Activated CD4-positive, alpha-beta T cell treated with anti-CD3 and anti-CD28 coated beads, Interleukin-2, amount 10 ng/mL, durations not matched to agents 24 days and 14 days (primary cell): ENCODE measurements at regions of chr3 and their contacts with region 1.

Region 1: DNA sequence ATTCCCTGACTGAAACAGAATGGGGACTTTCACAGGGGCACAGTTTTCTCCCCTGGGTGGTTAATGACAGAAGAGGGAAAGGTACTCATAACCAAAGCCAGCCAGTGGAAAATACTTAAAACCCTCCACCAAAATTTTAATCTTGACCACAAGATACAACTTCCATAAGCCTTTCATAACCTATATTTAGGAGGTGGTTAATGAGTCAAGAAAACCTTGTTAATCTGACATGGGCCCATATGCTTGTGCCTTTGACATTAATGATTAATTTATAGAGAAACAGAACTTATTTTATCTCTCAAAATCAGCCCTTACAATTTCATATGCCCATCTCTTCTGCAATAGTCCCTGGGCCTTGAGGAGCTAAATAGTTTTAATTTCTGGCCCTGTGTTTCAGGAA is 31.2 kb downstream of the IQCF6 start:
- DNase-seq: no peak
- H3K4me3 Mint-ChIP-seq: no peak overlapping the region
- H3K27ac Mint-ChIP-seq: no peak overlapping the region
- H3K4me1 Mint-ChIP-seq: peaks cover 16% of the 10 kb centered on the region
- H3K27me3 Mint-ChIP-seq: no peaks in the 10 kb centered on the region

Region 2: DNA sequence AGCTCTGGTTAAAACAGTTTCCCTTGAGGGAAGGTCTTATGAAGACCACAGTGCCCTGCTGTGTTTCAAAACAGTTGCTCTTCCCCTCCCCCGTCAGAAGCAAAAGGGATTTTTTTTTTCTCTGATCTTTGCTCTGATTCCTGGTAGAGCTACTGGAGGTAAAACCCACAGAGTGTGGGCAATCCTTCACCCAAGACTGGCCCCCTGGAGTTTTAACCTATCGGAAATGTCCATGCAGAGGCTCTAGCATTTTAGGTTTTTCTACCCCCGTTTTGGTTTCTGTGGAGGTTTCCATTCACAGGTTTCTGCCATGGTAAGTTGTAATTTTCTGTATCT is 13.3 kb before region 1 on chr3:
- intact Hi-C with region 1: loop called (anchors 1 kb)
- DNase-seq: peak; percentile 81
- H3K4me3 Mint-ChIP-seq: peak overlapping the region; percentile 52
- H3K27ac Mint-ChIP-seq: peak overlapping the region; percentile 83
- H3K4me1 Mint-ChIP-seq: peaks cover 29% of the 10 kb centered on the region
- H3K27me3 Mint-ChIP-seq: peaks cover 8% of the 10 kb centered on the region